Posterior vena cava (tissue), 2 donors: ENCODE measurements at regions of chr14 and their contacts with region 1.

Region 1: GRCh38 chr14:63663430-63664341 is 22.0 kb upstream of the WDR89 start:
- DNase-seq: no peak

Region 2: GRCh38 chr14:61761959-61762786 is 1901.5 kb before region 1 on chr14 and contains the start of gene SNAPC1:
- intact Hi-C with region 1: loop called in 1 of 2 experiments (anchors 10 kb)
- DNase-seq: peak; percentile 99
- total RNA-seq, gene SNAPC1: 5.3 to 6.8 TPM